Activated B cell treated with CpG ODN at 0.5 μM for 24 hours (primary cell): ENCODE measurements at regions of chr20 and their contacts with region 1.

Region 1: GRCh38 chr20:17504898-17505635 is 26.1 kb downstream of the BFSP1 start:
- DNase-seq: peak; percentile 51
- ATAC-seq: peak; percentile 84
- H3K4me3 Mint-ChIP-seq: peak overlapping the region; percentile 91
- H3K27ac Mint-ChIP-seq: peak overlapping the region; percentile 85
- H3K4me1 Mint-ChIP-seq: peaks cover 9% of the 10 kb centered on the region
- H3K27me3 Mint-ChIP-seq: peaks cover 12% of the 10 kb centered on the region
- CTCF ChIP-seq: peak; percentile 56

Region 2: GRCh38 chr20:17536944-17537444 is 31.9 kb after region 1 on chr20:
- CTCF ChIA-PET with region 1: interaction called, 4 read pairs
- POLR2A ChIA-PET with region 1: no interaction called
- intact Hi-C with region 1: loop called (anchors 1 kb)
- DNase-seq: peak; percentile 30
- ATAC-seq: peak; percentile 92
- H3K4me3 Mint-ChIP-seq: no peak overlapping the region
- H3K27ac Mint-ChIP-seq: no peak overlapping the region
- H3K4me1 Mint-ChIP-seq: peaks cover 5% of the 10 kb centered on the region
- H3K27me3 Mint-ChIP-seq: peaks cover 26% of the 10 kb centered on the region
- CTCF ChIP-seq: no peak

Region 3: DNA sequence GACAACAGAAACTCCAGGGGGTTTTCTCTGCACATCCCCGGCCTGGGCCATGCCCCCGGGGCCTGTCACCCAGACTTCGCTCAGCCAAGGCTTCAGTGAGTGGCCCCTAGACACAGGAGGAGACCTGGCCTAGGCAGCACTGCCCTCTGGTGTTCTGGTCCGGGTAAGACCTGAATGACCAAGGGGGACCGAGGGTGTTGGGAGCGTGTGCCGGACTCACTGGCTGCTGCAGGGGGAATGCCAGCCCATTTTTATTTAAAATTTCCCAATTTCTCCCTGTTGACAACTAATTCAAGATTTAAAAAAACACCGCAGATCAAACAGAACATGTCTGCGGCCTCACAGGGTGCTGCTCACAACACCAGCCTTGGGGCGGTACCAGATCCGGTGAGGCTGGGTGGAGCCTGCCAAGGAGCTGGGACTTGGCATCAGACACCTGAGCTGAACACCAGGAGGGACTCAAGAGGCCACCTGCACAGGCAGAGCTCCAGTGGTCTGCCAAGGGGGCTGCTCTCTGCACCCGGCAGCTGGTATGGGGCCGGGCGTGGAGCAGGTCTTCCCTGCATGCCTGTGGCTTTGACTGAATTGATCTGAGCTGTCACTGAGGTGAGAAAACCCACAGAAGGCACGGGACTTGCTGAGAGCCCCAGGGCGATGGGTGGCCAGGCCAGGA is 112.6 kb after region 1 on chr20:
- CTCF ChIA-PET with region 1: interaction called, 5 read pairs
- POLR2A ChIA-PET with region 1: no interaction called
- intact Hi-C with region 1: loop called (anchors 1 kb)
- DNase-seq: peak; percentile 20
- ATAC-seq: peak; percentile 70
- H3K4me3 Mint-ChIP-seq: no peak overlapping the region
- H3K27ac Mint-ChIP-seq: no peak overlapping the region
- H3K4me1 Mint-ChIP-seq: peaks cover 2% of the 10 kb centered on the region
- H3K27me3 Mint-ChIP-seq: no peaks in the 10 kb centered on the region
- CTCF ChIP-seq: no peak

Region 4: GRCh38 chr20:17898548-17898994 is 393.5 kb after region 1 on chr20:
- CTCF ChIA-PET with region 1: interaction called, 10 read pairs
- POLR2A ChIA-PET with region 1: no interaction called
- intact Hi-C with region 1: loop called (anchors 1 kb)
- DNase-seq: no peak
- ATAC-seq: peak; percentile 78
- H3K4me3 Mint-ChIP-seq: no peak overlapping the region
- H3K27ac Mint-ChIP-seq: no peak overlapping the region
- H3K4me1 Mint-ChIP-seq: peaks cover 53% of the 10 kb centered on the region
- H3K27me3 Mint-ChIP-seq: peaks cover 16% of the 10 kb centered on the region
- CTCF ChIP-seq: peak; percentile 93

Region 5: GRCh38 chr20:17995967-17996819 is 491.1 kb after region 1 on chr20:
- CTCF ChIA-PET with region 1: interaction called, 11 read pairs
- POLR2A ChIA-PET with region 1: interaction called, 3 read pairs
- intact Hi-C with region 1: loop called (anchors 1 kb)
- DNase-seq: no peak
- ATAC-seq: peak; percentile 91
- H3K4me3 Mint-ChIP-seq: no peak overlapping the region
- H3K27ac Mint-ChIP-seq: peak overlapping the region; percentile 20
- H3K4me1 Mint-ChIP-seq: peaks cover 29% of the 10 kb centered on the region
- H3K27me3 Mint-ChIP-seq: no peaks in the 10 kb centered on the region
- CTCF ChIP-seq: peak; percentile 89

Region 6: DNA sequence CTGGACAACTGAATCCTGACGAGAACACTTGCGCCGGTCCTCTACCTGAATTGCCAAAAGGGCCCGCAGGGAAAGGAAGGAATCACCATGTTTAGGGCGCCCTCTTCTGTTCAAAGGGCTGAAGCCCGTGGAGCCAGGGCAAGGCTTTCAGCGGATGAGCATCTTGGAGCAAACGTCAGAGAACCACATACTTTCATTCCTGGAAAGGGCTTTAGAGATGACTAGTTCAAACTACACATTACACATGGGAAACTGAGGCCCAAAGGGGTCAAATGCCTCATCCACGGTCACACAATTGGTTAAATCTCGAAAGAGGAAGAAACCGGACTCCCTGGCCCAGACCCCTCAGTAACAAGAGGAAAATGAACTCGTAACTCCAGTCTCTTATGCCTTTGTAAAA is 771.8 kb after region 1 on chr20:
- CTCF ChIA-PET with region 1: interaction called, 8 read pairs
- POLR2A ChIA-PET with region 1: no interaction called
- intact Hi-C with region 1: loop called (anchors 1 kb)
- DNase-seq: peak; percentile 21
- ATAC-seq: peak; percentile 66
- H3K4me3 Mint-ChIP-seq: no peak overlapping the region
- H3K27ac Mint-ChIP-seq: no peak overlapping the region
- H3K4me1 Mint-ChIP-seq: no peaks in the 10 kb centered on the region
- H3K27me3 Mint-ChIP-seq: peaks cover 37% of the 10 kb centered on the region
- CTCF ChIP-seq: no peak

Region 7: GRCh38 chr20:18728165-18728869 is 1223.2 kb after region 1 on chr20:
- CTCF ChIA-PET with region 1: no interaction called
- POLR2A ChIA-PET with region 1: no interaction called
- intact Hi-C with region 1: loop called (anchors 10 kb)
- DNase-seq: peak; percentile 40
- ATAC-seq: peak; percentile 96
- H3K4me3 Mint-ChIP-seq: peak overlapping the region; percentile 64
- H3K27ac Mint-ChIP-seq: peak overlapping the region; percentile 70
- H3K4me1 Mint-ChIP-seq: peaks cover 42% of the 10 kb centered on the region
- H3K27me3 Mint-ChIP-seq: no peaks in the 10 kb centered on the region
- CTCF ChIP-seq: no peak